CD8-positive, alpha-beta memory T cell (primary cell): ENCODE measurements at regions of chr6 and their contacts with region 1.

Region 1: GRCh38 chr6:53342217-53342616 is 6.5 kb downstream of the ELOVL5 start:
- DNase-seq: no peak
- H3K4me3 ChIP-seq: no peak overlapping the region
- H3K4me3 Mint-ChIP-seq: peak overlapping the region in 5 of 7 donors; percentile 5 to 39 (median 10)
- H3K27ac ChIP-seq: no peak overlapping the region
- H3K27ac Mint-ChIP-seq: peak overlapping the region in 7 of 8 donors; percentile 5 to 94 (median 58)
- H3K4me1 ChIP-seq: peaks cover 92% of the 10 kb centered on the region
- H3K4me1 Mint-ChIP-seq: peaks cover 89 to 98% (median 96%) of the 10 kb centered on the region in 3 donors
- H3K27me3 ChIP-seq: no peaks in the 10 kb centered on the region
- H3K27me3 Mint-ChIP-seq: no peaks in the 10 kb centered on the region

Region 2: DNA sequence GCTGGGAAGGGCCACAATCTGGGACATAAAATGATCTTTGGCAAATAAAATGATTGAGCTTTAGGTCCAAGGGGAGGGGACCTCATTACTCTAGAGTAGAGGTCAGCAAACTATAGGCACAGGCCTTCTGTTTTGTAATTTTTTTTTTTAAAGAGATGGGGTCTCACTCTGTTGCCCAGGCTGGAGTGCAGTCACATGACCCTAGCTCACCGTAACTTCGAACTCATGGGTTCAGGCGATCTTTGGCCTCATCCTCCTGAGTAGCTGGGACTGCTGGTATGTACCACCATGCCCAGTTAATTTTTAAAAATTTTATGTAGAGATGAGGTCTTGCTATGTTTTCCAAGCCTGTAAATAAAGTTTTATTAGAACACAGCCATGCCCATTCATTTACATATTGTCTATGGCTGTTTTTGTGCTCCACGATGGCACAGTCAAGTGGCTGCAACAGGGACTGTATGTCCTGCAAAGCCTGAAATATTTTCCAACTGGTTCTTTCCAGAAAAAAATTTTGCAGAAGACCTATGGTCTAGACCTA is 75.6 kb before region 1 on chr6:
- CTCF ChIA-PET with region 1: no interaction called
- POLR2A ChIA-PET with region 1: no interaction called
- DNase-seq: no peak
- H3K4me3 ChIP-seq: no peak overlapping the region
- H3K4me3 Mint-ChIP-seq: no peak overlapping the region
- H3K27ac ChIP-seq: no peak overlapping the region
- H3K27ac Mint-ChIP-seq: peak overlapping the region in 3 of 8 donors; percentile 3 to 70 (median 47)
- H3K4me1 ChIP-seq: no peaks in the 10 kb centered on the region
- H3K4me1 Mint-ChIP-seq: peaks cover 0 to 6% (median 6%) of the 10 kb centered on the region in 3 donors
- H3K27me3 ChIP-seq: no peaks in the 10 kb centered on the region
- H3K27me3 Mint-ChIP-seq: no peaks in the 10 kb centered on the region

Region 3: DNA sequence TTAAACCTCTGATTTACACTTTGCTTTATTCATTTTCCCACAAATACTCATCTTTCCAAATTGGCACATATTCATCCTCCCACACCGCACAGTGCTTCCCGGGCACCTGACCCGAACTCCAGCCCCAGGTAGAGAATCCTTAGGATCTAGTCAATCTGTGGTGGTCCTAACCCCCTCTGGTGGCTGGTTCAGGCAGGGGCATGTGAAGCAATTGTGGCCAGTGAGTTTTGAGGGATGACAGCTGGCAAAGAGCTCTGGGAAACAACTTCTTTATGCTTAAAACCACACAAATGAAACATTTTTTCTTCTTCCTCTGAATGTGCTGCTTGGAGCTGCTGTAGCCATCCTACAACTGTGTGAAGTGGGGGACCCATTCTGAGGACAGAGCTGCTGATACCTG is 48.1 kb before region 1 on chr6:
- CTCF ChIA-PET with region 1: interaction called, 14 read pairs
- POLR2A ChIA-PET with region 1: interaction called, 9 read pairs
- DNase-seq: peak in 2 of 5 donors; percentile 46 to 51
- H3K4me3 ChIP-seq: no peak overlapping the region
- H3K4me3 Mint-ChIP-seq: no peak overlapping the region
- H3K27ac ChIP-seq: no peak overlapping the region
- H3K27ac Mint-ChIP-seq: peak overlapping the region; percentile 0 to 95 (median 60)
- H3K4me1 ChIP-seq: peaks cover 66% of the 10 kb centered on the region
- H3K4me1 Mint-ChIP-seq: peaks cover 83 to 98% (median 96%) of the 10 kb centered on the region in 3 donors
- H3K27me3 ChIP-seq: no peaks in the 10 kb centered on the region
- H3K27me3 Mint-ChIP-seq: no peaks in the 10 kb centered on the region

Region 4: GRCh38 chr6:53330137-53330536 is 12.1 kb before region 1 on chr6:
- CTCF ChIA-PET with region 1: interaction called, 36 read pairs
- POLR2A ChIA-PET with region 1: interaction called, 51 read pairs
- DNase-seq: no peak
- H3K4me3 ChIP-seq: no peak overlapping the region
- H3K4me3 Mint-ChIP-seq: no peak overlapping the region
- H3K27ac ChIP-seq: no peak overlapping the region
- H3K27ac Mint-ChIP-seq: peak overlapping the region in 1 of 8 donors; percentile 9
- H3K4me1 ChIP-seq: peaks cover 72% of the 10 kb centered on the region
- H3K4me1 Mint-ChIP-seq: peaks cover 86 to 93% (median 86%) of the 10 kb centered on the region in 3 donors
- H3K27me3 ChIP-seq: no peaks in the 10 kb centered on the region
- H3K27me3 Mint-ChIP-seq: no peaks in the 10 kb centered on the region